Caco-2 (cell line): ENCODE measurements at regions of chr2 and their contacts with region 1.

Region 1: GRCh38 chr2:105888625-105889400 is 144.1 kb downstream of the NCK2 start:
- DNase-seq: peak; percentile 80 to 81
- H3K4me3 ChIP-seq: no peak overlapping the region
- H3K4me3 Mint-ChIP-seq: no peak overlapping the region
- H3K27ac Mint-ChIP-seq: no peak overlapping the region
- H3K4me1 ChIP-seq: peaks cover 24% of the 10 kb centered on the region
- H3K4me1 Mint-ChIP-seq: peaks cover 30% of the 10 kb centered on the region
- H3K27me3 ChIP-seq: no peaks in the 10 kb centered on the region
- H3K27me3 Mint-ChIP-seq: no peaks in the 10 kb centered on the region
- CTCF ChIP-seq: peak; percentile 68 to 88

Region 2: GRCh38 chr2:105526000-105526925 is 362.6 kb before region 1 on chr2:
- CTCF ChIA-PET with region 1: no interaction called
- POLR2A ChIA-PET with region 1: no interaction called
- intact Hi-C with region 1: loop called (anchors 2 kb)
- DNase-seq: no peak
- H3K4me3 ChIP-seq: no peak overlapping the region
- H3K4me3 Mint-ChIP-seq: no peak overlapping the region
- H3K27ac Mint-ChIP-seq: no peak overlapping the region
- H3K4me1 ChIP-seq: no peaks in the 10 kb centered on the region
- H3K4me1 Mint-ChIP-seq: no peaks in the 10 kb centered on the region
- H3K27me3 ChIP-seq: no peaks in the 10 kb centered on the region
- H3K27me3 Mint-ChIP-seq: no peaks in the 10 kb centered on the region
- CTCF ChIP-seq: no peak

Region 3: GRCh38 chr2:105641389-105641811 is 247.4 kb before region 1 on chr2:
- CTCF ChIA-PET with region 1: no interaction called
- POLR2A ChIA-PET with region 1: no interaction called
- intact Hi-C with region 1: loop called (anchors 5 kb)
- DNase-seq: no peak
- H3K4me3 ChIP-seq: no peak overlapping the region
- H3K4me3 Mint-ChIP-seq: no peak overlapping the region
- H3K27ac Mint-ChIP-seq: no peak overlapping the region
- H3K4me1 ChIP-seq: peaks cover 11% of the 10 kb centered on the region; the same call in 1 of the 2 replicates
- H3K4me1 Mint-ChIP-seq: no peaks in the 10 kb centered on the region
- H3K27me3 ChIP-seq: no peaks in the 10 kb centered on the region
- H3K27me3 Mint-ChIP-seq: no peaks in the 10 kb centered on the region
- CTCF ChIP-seq: no peak

Region 4: DNA sequence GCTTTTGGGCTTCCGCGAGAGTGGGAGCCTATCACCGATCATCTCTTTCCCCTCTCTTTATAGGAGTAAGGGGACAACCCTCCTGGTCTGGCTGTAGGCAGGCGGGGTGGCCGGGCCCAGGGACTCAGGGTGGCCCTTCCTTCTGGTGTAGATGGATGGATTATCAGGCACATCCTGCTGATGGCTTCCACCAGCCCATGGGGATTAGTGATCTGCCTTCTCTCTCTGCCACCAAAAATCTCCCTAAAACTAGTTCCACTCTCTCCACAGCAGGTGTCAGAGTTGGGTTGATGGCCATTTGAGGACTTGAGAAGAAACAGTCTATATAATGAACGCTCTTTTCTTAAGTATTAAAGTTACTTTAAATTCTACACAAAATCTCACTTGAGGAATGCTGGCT is 106.7 kb before region 1 on chr2:
- CTCF ChIA-PET with region 1: interaction called, 7 read pairs
- POLR2A ChIA-PET with region 1: no interaction called
- intact Hi-C with region 1: loop called (anchors 1 kb)
- DNase-seq: no peak
- H3K4me3 ChIP-seq: no peak overlapping the region
- H3K4me3 Mint-ChIP-seq: no peak overlapping the region
- H3K27ac Mint-ChIP-seq: no peak overlapping the region
- H3K4me1 ChIP-seq: no peaks in the 10 kb centered on the region
- H3K4me1 Mint-ChIP-seq: peaks cover 13% of the 10 kb centered on the region
- H3K27me3 ChIP-seq: no peaks in the 10 kb centered on the region
- H3K27me3 Mint-ChIP-seq: no peaks in the 10 kb centered on the region
- CTCF ChIP-seq: peak in 1 of 2 experiments; percentile 20

Region 5: GRCh38 chr2:105827351-105828096 is 61.3 kb before region 1 on chr2:
- CTCF ChIA-PET with region 1: no interaction called
- POLR2A ChIA-PET with region 1: no interaction called
- intact Hi-C with region 1: no loop called
- DNase-seq: no peak
- H3K4me3 ChIP-seq: no peak overlapping the region
- H3K4me3 Mint-ChIP-seq: no peak overlapping the region
- H3K27ac Mint-ChIP-seq: no peak overlapping the region
- H3K4me1 ChIP-seq: peaks cover 10% of the 10 kb centered on the region
- H3K4me1 Mint-ChIP-seq: peaks cover 18% of the 10 kb centered on the region
- H3K27me3 ChIP-seq: no peaks in the 10 kb centered on the region
- H3K27me3 Mint-ChIP-seq: no peaks in the 10 kb centered on the region
- CTCF ChIP-seq: no peak

Region 6: DNA sequence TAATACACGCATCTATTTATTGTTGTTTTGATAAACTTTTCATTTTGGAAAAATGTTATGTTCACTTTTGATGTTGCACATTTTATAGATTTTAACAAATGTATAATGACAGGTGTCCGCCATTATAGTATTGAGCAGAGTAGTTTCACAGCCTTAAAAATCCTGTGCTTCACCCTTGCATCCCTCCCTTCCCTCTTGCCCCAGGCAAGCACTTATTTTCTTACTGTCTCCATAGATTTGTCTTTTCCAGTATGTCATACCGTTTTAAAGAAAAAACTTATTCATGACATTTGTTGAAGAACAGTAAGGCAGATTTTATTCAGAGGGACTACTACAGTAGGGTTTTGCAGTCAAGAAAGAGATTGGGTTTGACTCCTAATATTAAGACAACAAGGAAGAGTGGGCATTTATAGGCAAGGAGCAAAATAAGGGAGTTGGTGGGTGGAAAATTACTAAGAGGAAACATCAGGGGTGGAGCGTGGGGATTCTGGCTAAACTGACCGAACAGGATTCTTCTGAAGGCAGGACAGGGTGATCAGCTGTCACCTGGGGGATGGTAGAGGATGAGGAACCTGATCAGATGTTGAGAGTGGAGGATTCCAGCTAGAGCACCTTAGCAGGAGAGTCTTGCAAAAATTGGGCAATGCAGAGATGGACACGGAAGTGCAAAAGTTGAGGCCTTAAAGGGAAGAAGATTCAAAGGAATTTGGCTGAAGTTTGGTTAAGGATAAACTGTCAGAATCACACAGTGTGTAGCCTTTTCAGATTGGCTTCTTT is 35.3 kb before region 1 on chr2:
- CTCF ChIA-PET with region 1: no interaction called
- POLR2A ChIA-PET with region 1: no interaction called
- intact Hi-C with region 1: loop called (anchors 1 kb)
- DNase-seq: peak; percentile 84
- H3K4me3 ChIP-seq: no peak overlapping the region
- H3K4me3 Mint-ChIP-seq: peak overlapping the region; percentile 46
- H3K27ac Mint-ChIP-seq: peak overlapping the region; percentile 60
- H3K4me1 ChIP-seq: peaks cover 37% of the 10 kb centered on the region
- H3K4me1 Mint-ChIP-seq: peaks cover 40% of the 10 kb centered on the region
- H3K27me3 ChIP-seq: no peaks in the 10 kb centered on the region
- H3K27me3 Mint-ChIP-seq: no peaks in the 10 kb centered on the region
- CTCF ChIP-seq: no peak

Region 7: DNA sequence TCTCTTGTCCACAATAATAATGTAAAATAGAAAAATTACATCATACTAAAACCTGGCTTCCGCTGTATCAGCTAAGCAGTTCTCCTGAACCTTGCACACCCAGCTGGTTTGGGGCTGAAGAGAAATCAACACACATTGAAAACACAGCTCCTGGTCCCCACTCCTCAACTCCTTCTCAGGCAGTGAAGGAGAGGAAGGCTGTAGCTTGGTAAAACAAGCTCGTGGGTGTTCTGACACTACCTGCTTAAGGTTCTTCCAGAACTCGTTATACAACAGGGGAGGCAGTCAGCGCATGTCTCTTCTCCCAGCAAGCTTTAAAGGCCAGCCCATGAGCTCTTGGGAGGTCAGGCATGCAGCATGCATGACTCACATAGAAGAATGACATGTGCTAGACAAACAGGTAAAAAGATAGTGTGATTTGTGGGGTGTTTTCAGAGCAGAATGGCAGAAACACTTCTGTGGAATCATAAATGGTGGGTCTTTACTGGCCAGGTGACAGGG is 236.1 kb after region 1 on chr2:
- CTCF ChIA-PET with region 1: no interaction called
- POLR2A ChIA-PET with region 1: no interaction called
- intact Hi-C with region 1: no loop called
- DNase-seq: peak; percentile 57 to 60
- H3K4me3 ChIP-seq: no peak overlapping the region
- H3K4me3 Mint-ChIP-seq: no peak overlapping the region
- H3K27ac Mint-ChIP-seq: peak overlapping the region; percentile 69
- H3K4me1 ChIP-seq: peaks cover 58% of the 10 kb centered on the region
- H3K4me1 Mint-ChIP-seq: peaks cover 50% of the 10 kb centered on the region
- H3K27me3 ChIP-seq: no peaks in the 10 kb centered on the region
- H3K27me3 Mint-ChIP-seq: no peaks in the 10 kb centered on the region
- CTCF ChIP-seq: no peak

Region 8: GRCh38 chr2:106156305-106157296 is 267.8 kb after region 1 on chr2:
- CTCF ChIA-PET with region 1: no interaction called
- POLR2A ChIA-PET with region 1: no interaction called
- intact Hi-C with region 1: no loop called
- DNase-seq: no peak
- H3K4me3 ChIP-seq: no peak overlapping the region
- H3K4me3 Mint-ChIP-seq: no peak overlapping the region
- H3K27ac Mint-ChIP-seq: no peak overlapping the region
- H3K4me1 ChIP-seq: peaks cover 11% of the 10 kb centered on the region
- H3K4me1 Mint-ChIP-seq: peaks cover 15% of the 10 kb centered on the region
- H3K27me3 ChIP-seq: no peaks in the 10 kb centered on the region
- H3K27me3 Mint-ChIP-seq: no peaks in the 10 kb centered on the region
- CTCF ChIP-seq: no peak